AG04450 (cell line): ENCODE measurements at regions of chr17 and their contacts with region 1.

Region 1: GRCh38 chr17:7627250-7628121 is at the start of gene SAT2:
- DNase-seq: peak; percentile 86
- H3K4me3 ChIP-seq: peak within 1 kb of the TSS; percentile 86
- H3K27ac ChIP-seq: peak within 1 kb of the TSS; percentile 91
- H3K27me3 ChIP-seq: no peaks in the 10 kb centered on the region
- CTCF ChIP-seq: no peak
- polyA plus RNA-seq, gene SAT2: 54.1 and 61.5 TPM in 2 replicates

Region 2: GRCh38 chr17:7614422-7615264 is 12.8 kb before region 1 on chr17 and contains the start of gene FXR2:
- CTCF ChIA-PET with region 1: interaction called, 17 read pairs
- POLR2A ChIA-PET with region 1: interaction called, 17 read pairs
- DNase-seq: peak; percentile 100
- H3K4me3 ChIP-seq: peak within 1 kb of the TSS; percentile 86
- H3K27ac ChIP-seq: peak within 1 kb of the TSS; percentile 80
- H3K27me3 ChIP-seq: peaks cover under 1% of the 10 kb centered on the region
- CTCF ChIP-seq: peak; percentile 66
- polyA plus RNA-seq, gene FXR2: 24.6 and 29.4 TPM in 2 replicates